ENCODE measurements at regions of chr6 and their contacts with region 1.

Region 1: DNA sequence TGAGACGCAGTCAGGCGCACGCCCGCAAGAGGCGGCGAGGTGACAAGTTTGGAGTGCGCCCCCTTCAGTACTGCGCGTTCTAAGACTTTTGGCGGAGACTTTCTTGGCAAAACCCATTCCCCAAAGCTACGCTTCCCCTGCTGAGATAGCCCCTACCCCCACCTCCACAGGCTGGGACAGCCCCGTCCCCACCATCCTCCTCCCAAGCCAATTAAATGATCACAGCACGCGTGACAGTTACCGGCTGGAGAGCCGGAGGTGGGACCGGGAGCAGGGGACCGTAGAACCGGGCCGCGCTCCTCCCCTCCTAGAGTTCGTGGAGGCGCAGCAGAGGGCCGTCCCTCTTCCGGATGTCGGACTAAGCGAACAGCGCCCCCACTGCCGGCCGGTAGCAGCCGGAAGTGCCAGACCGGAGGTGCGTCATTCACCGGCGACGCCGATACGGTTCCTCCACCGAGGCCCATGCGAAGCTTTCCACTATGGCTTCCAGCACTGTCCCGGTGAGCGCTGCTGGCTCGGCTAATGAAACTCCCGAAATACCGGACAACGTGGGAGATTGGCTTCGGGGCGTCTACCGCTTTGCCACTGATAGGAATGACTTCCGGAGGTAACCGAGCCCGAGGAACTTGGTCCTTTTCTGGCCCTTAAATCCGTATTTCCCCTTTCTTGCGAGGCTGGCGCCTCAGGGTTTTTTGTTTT is at the start of gene TOMM6:
- DNase-seq: peak; percentile 83 to 92
- H3K4me3 ChIP-seq: peak within 1 kb of the TSS; percentile 100
- H3K27ac ChIP-seq: peak within 1 kb of the TSS; percentile 91
- H3K4me1 ChIP-seq: peaks cover 42% of the 10 kb centered on the region
- H3K27me3 ChIP-seq: no peaks in the 10 kb centered on the region
- CTCF ChIP-seq: peak; percentile 88
- total RNA-seq, gene TOMM6: 143 and 170 TPM in 2 replicates

Region 2: GRCh38 chr6:41536795-41537758 is 250.3 kb before region 1 on chr6:
- CTCF ChIA-PET with region 1: interaction called, 10 read pairs
- POLR2A ChIA-PET with region 1: no interaction called
- intact Hi-C with region 1: no loop called
- DNase-seq: peak; percentile 75 to 79
- H3K4me3 ChIP-seq: no peak overlapping the region
- H3K27ac ChIP-seq: no peak overlapping the region
- H3K4me1 ChIP-seq: peaks cover 32% of the 10 kb centered on the region
- H3K27me3 ChIP-seq: no peaks in the 10 kb centered on the region
- CTCF ChIP-seq: no peak

Region 3: GRCh38 chr6:42175860-42176259 is 388.5 kb after region 1 on chr6:
- CTCF ChIA-PET with region 1: no interaction called
- POLR2A ChIA-PET with region 1: interaction called, 14 read pairs
- intact Hi-C with region 1: no loop called
- DNase-seq: no peak
- H3K4me3 ChIP-seq: no peak overlapping the region
- H3K27ac ChIP-seq: no peak overlapping the region
- H3K4me1 ChIP-seq: 0 out of 2 replicates have a peak, but pooled peaks cover 6% of the 10 kb centered on the region
- H3K27me3 ChIP-seq: no peaks in the 10 kb centered on the region
- CTCF ChIP-seq: peak; percentile 49